ENCODE measurements at regions of chr10 and their contacts with region 1.

Region 1: DNA sequence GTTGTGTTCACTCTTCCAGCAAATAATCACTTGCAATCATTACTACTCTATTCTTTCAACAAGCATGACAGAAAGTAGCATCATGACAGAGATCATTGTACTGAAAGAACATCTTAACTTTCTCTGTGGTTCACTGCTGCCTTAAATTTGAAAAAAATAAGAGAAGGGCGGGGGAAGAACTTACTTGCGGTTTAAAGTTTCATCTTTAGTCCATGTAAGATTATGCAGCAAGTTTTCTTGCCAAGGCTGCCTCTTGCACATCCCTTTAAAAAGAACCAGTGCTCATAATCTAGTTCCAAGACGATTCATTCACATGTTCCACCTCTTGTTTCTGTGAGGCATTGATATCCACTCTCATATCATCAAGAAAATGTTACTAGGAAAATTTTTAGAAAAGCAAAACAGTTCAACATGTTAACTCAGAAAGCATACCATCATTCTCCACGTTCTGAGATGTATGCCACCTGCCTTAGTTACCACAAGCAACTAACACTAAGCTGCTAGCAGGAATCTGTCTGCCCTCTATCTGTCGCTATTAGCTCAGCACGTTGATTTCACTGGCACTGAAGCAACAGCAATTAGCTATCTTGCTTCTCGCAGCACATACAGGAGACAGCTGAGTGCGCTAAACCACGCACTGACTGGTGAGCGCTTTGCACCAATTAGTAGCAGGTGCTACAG is at the start of gene PCDH15:
- DNase-seq: peak; percentile 51
- H3K4me3 Mint-ChIP-seq: no peak within 1 kb of the TSS
- H3K27ac Mint-ChIP-seq: no peak within 1 kb of the TSS
- H3K4me1 Mint-ChIP-seq: peaks cover 8% of the 10 kb centered on the region
- H3K27me3 Mint-ChIP-seq: no peaks in the 10 kb centered on the region
- CTCF ChIP-seq: peak; percentile 66
- total RNA-seq, gene PCDH15: not detected in 2 replicates

Region 2: GRCh38 chr10:54415483-54415882 is 385.4 kb before region 1 on chr10:
- CTCF ChIA-PET with region 1: no interaction called
- intact Hi-C with region 1: loop called (anchors 10 kb)
- DNase-seq: no peak
- H3K4me3 Mint-ChIP-seq: no peak overlapping the region
- H3K27ac Mint-ChIP-seq: no peak overlapping the region
- H3K4me1 Mint-ChIP-seq: no peaks in the 10 kb centered on the region
- H3K27me3 Mint-ChIP-seq: no peaks in the 10 kb centered on the region
- CTCF ChIP-seq: no peak

Region 3: DNA sequence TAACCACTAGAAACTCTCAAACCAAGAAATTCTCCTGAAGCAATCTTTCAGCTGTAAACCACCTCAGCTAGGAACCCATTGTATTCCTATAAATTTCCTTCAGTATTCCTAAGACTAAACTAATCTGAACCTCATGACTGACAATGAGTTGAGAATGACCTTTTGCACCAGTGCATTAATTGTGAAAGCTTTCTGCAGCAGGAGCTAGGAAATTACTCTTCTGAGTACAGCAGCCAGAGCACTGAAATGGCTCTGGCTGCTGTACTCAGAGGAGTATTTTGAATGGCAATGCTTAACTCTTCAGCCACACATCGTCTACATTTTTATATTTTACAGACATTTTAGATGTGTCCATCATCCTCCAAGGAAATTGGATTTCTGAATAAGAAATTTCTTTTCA is 109.5 kb before region 1 on chr10:
- CTCF ChIA-PET with region 1: interaction called, 3 read pairs
- intact Hi-C with region 1: loop called (anchors 10 kb)
- DNase-seq: no peak
- H3K4me3 Mint-ChIP-seq: no peak overlapping the region
- H3K27ac Mint-ChIP-seq: no peak overlapping the region
- H3K4me1 Mint-ChIP-seq: no peaks in the 10 kb centered on the region
- H3K27me3 Mint-ChIP-seq: no peaks in the 10 kb centered on the region
- CTCF ChIP-seq: no peak

Region 4: GRCh38 chr10:55242544-55242943 is 441.7 kb after region 1 on chr10:
- CTCF ChIA-PET with region 1: no interaction called
- intact Hi-C with region 1: loop called (anchors 10 kb)
- DNase-seq: no peak
- H3K4me3 Mint-ChIP-seq: no peak overlapping the region
- H3K27ac Mint-ChIP-seq: no peak overlapping the region
- H3K4me1 Mint-ChIP-seq: peaks cover 10% of the 10 kb centered on the region
- H3K27me3 Mint-ChIP-seq: no peaks in the 10 kb centered on the region
- CTCF ChIP-seq: no peak